Activated CD8-positive, alpha-beta T cell treated with anti-CD3 and anti-CD28 coated beads, Interleukin-2, amount 10 ng/mL, durations not matched to agents 7 days and 5 days (primary cell): ENCODE measurements at regions of chr6 and their contacts with region 1.

Region 1: DNA sequence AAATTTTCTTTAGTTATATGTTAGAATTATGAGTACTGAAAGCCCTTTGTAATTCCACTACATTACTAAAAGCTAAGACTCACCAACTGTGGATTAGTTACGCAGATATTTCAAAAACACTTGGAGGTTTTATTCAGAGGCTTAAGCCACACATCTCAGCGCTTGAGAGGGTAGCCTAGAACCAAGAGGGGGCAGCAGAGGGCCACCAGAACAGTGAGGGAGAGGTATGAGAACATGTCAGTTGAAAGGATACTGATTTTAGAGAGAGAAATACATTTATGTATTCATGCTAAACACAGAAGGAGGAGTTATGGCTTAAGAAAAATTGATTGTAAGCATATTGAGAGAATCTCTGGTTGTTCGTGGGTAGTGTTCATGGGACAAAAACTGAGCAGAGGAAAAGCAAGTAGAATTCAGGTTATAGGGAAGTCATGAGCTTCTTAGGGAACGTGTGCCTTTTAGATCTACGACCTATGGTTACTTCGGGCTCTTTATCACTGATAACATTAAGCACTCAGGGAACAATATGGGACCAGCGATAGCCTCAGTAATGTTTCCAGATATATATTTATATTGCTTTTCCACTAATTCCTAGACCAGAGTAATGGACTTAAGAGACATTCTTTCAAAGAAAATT is 20.4 kb upstream of the SERINC1 start:
- DNase-seq: peak; percentile 85
- ATAC-seq: peak; percentile 97
- H3K4me3 Mint-ChIP-seq: no peak overlapping the region
- H3K27ac Mint-ChIP-seq: no peak overlapping the region
- H3K4me1 Mint-ChIP-seq: peaks cover 21% of the 10 kb centered on the region
- H3K27me3 Mint-ChIP-seq: peaks cover under 1% of the 10 kb centered on the region

Region 2: DNA sequence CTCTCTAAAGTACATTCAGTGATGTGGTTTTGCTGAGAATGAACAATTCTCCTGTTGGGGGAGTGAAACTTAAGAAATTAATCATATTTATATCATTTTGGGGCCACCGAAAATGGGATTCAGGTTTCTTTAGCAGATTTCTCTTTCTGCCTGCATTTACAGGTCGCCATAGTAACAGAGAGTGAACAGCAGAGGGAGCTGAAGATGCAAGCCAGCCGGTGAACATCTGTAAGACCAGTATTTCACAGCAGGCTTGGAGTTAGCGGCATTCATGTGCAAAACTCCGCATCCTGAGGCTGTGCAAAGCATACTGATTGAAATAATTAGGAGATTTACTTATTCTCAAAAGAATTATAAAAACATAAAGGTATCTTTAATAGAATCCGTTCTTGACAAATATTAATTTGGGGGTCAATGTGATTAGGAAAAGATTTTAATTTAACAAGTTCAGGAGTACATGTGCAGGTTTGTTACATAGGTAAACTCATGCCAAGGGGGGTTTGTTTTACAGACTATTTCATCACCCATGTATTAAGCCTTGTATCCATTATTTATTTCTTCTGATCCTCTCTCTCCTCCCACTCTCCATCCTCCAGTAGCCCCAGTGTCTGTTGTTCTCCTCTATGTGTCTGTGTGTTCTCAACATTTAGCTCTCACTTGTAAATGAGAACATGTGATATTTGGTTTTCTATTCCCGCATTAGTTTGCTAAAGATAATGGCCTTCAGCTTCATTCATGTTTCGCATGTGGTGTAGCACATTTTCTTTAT is 110.4 kb before region 1 on chr6:
- CTCF ChIA-PET with region 1: interaction called, 23 read pairs
- POLR2A ChIA-PET with region 1: no interaction called
- DNase-seq: peak; percentile 71
- ATAC-seq: peak; percentile 91
- H3K4me3 Mint-ChIP-seq: no peak overlapping the region
- H3K27ac Mint-ChIP-seq: no peak overlapping the region
- H3K4me1 Mint-ChIP-seq: no peaks in the 10 kb centered on the region
- H3K27me3 Mint-ChIP-seq: peaks cover 8% of the 10 kb centered on the region

Region 3: DNA sequence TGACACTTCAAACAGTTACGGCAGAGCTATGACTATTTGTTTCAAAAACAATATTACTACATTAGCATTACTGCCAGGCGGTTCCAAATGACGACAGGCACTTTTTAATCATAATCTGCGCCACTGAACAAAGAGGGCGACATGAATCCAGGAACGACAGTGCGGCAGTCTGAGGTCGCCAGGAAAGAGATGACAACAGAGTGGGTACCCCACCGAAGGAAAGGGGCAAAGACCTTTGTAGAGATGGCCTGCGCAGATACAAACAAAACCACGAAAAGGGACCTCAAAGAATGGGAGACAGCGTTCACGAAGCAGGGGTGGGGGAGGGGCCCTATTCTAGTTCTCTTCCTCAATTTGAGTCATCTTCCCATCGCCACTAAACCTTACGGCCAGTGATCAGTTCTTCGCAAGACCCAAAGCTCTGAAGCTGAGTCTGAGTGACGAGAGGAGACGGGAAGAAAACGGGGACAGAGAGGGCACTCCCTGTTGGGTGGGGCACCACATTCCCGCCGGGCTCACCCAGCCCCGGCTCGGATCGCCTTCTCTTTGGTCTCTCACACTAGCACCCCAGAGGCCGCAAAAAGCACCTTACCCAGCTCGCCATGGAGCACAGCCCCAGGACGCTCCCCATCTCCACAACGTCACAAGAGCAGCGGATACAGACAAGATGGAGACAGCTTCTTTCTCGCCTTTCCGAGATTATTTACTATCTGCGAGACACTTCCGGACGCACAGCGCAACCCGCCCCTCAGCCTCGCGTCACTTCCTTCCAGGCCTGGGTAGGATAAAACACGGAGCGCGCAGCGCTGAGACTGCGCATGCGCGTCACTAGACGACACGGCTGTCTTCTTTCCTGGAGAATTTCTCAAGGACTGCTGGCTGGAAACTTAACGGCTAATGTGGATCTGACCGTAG is 20.7 kb before region 1 on chr6 and contains the start of gene SERINC1:
- CTCF ChIA-PET with region 1: interaction called, 13 read pairs
- POLR2A ChIA-PET with region 1: interaction called, 10 read pairs
- DNase-seq: peak; percentile 95
- ATAC-seq: peak; percentile 99
- H3K4me3 Mint-ChIP-seq: peak within 1 kb of the TSS; percentile 94
- H3K27ac Mint-ChIP-seq: peak within 1 kb of the TSS; percentile 99
- H3K4me1 Mint-ChIP-seq: peaks cover 23% of the 10 kb centered on the region
- H3K27me3 Mint-ChIP-seq: no peaks in the 10 kb centered on the region
- total RNA-seq, gene SERINC1: 41.9 to 44.9 TPM

Region 4: GRCh38 chr6:122530440-122531046 is 38.5 kb after region 1 on chr6:
- CTCF ChIA-PET with region 1: interaction called, 290 read pairs
- POLR2A ChIA-PET with region 1: interaction called, 5 read pairs
- DNase-seq: peak; percentile 73
- ATAC-seq: peak; percentile 82
- H3K4me3 Mint-ChIP-seq: no peak overlapping the region
- H3K27ac Mint-ChIP-seq: no peak overlapping the region
- H3K4me1 Mint-ChIP-seq: no peaks in the 10 kb centered on the region
- H3K27me3 Mint-ChIP-seq: peaks cover 19% of the 10 kb centered on the region

Region 5: DNA sequence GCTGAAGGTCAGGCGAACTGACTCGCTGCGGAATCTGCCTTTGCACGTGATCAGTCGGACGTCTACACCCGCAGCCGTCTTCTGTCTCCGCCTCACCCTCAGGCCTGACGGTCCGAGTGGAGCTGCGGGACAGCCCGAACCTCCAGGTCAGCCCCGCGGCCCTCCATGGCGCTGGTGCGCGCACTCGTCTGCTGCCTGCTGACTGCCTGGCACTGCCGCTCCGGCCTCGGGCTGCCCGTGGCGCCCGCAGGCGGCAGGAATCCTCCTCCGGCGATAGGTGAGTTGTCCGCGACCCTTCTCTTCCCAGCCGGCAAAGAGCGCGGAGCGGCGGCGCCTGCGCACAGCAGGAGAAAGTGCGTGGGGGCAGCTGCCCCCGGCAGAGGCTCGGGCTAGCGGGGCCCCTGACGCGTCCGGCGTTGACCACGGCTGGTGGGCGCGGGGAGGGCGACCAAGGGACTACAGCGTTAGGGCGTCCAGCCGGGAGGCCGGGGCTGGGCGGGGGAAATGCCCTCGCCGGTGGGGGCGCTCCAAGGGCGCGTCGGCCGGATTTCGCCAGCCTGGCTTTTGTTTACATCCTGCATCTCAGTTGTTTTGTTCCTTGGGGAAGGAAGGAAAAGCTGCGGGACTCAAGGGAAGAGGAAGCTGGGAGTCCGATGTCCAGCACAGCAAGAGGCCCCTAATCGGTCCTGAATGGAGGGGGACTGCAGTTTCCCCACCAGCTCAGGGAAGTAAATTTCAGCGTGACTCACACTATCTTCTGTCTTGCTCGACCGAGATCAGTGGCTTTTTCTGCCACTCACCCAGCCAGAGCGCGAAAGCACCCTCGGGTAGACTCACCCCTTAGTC is 297.4 kb after region 1 on chr6 and contains the start of gene SMPDL3A:
- CTCF ChIA-PET with region 1: no interaction called
- POLR2A ChIA-PET with region 1: no interaction called
- DNase-seq: peak; percentile 27
- ATAC-seq: peak; percentile 79
- H3K4me3 Mint-ChIP-seq: peak within 1 kb of the TSS; percentile 83
- H3K27ac Mint-ChIP-seq: no peak within 1 kb of the TSS
- H3K4me1 Mint-ChIP-seq: peaks cover 10% of the 10 kb centered on the region
- H3K27me3 Mint-ChIP-seq: peaks cover 49% of the 10 kb centered on the region
- total RNA-seq, gene SMPDL3A: not detected

Region 6: DNA sequence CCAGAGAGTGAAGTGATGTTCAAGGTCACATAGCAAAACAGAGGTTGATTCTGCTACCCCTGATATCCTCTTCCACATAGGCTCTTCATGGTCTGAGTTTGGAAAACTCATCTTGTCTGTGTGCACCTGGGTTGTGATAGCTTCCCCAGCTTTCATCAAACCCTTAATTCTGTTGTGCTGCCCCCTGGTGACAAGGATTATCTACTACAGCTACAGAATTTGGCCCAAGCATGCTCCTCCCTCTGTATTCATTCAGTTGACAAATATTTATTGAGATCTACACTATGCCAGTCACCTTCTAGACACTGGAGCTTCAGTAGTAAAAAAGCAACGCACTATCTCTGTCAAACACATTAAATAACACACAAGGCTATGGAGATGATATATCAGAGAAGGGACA is 347.4 kb after region 1 on chr6:
- CTCF ChIA-PET with region 1: interaction called, 11 read pairs
- POLR2A ChIA-PET with region 1: no interaction called
- DNase-seq: peak; percentile 70
- ATAC-seq: peak; percentile 60
- H3K4me3 Mint-ChIP-seq: no peak overlapping the region
- H3K27ac Mint-ChIP-seq: no peak overlapping the region
- H3K4me1 Mint-ChIP-seq: no peaks in the 10 kb centered on the region
- H3K27me3 Mint-ChIP-seq: peaks cover 5% of the 10 kb centered on the region

Region 7: DNA sequence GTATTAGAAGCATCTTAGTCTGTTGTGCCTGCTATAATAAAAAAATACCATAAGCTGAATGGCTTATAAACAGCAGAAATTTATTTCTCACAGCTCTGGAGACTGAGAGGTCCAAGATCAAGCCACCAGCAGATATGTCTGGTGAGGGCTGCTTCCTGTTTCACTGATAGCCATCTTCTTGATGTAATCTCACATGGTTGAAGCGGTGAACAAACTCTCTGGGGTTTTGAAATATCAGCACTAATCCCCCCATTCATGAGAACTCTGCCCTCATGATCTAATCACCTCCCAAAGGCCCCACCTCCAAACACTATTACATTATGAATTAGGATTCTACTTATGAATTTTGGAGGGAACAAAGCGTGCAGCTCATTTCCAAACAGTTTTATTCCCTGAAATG is 492.4 kb after region 1 on chr6:
- CTCF ChIA-PET with region 1: no interaction called
- POLR2A ChIA-PET with region 1: no interaction called
- DNase-seq: no peak
- ATAC-seq: no peak
- H3K4me3 Mint-ChIP-seq: no peak overlapping the region
- H3K27ac Mint-ChIP-seq: no peak overlapping the region
- H3K4me1 Mint-ChIP-seq: no peaks in the 10 kb centered on the region
- H3K27me3 Mint-ChIP-seq: no peaks in the 10 kb centered on the region